Heart left ventricle (tissue), 16 donors: ENCODE measurements at regions of chr1 and their contacts with region 1.

Region 1: DNA sequence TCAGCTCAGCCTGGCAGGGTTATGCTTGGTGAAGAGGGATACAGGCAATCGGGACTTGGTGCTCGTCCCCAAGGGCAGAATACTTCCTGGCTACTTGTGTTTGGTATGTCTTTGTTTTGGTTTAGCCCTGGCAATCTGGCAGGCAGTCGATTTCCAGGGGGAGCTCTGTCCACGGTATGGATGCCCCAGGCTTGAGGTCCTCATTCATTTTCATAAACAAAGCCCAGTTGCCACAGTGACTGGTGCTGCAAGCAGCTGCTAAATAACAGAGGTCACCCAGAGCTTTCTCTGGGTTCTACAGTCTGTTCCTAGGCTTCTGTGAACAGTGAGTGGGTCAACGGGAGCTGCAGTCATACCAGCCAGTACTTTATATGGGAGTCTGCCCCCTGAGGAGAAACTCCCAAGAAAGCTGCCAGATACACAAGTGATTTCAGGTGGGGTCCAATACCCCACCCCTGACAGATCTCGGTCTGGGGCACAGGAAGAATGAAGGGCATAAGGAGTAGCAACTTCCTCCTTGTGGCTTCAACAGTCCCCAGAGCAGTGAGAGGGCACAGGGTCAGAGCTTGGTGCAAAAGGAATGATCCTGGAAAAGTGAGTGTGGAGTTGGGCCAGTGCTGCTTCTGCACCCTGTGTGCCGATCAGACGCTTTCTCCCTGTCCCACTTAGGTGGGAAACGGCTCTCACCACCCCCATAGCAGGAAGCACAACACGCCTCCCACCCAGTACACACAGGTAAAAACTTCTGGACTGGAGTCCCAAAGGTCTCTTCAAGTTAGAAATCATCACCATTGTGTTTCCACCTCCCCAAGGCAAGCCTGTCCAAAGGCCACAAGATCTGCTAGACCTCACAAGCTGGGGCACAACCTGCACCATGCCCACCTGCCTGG is 55.5 kb downstream of the TGFBR3 start:
- DNase-seq: peak; percentile 69 to 86 (median 81)
- ATAC-seq: peak; percentile 75 to 80 (median 76)
- H3K4me3 ChIP-seq: peak overlapping the region in 1 of 12 donors; percentile 11
- H3K27ac ChIP-seq: peak overlapping the region; percentile 33 to 94 (median 84)
- H3K4me1 ChIP-seq: peaks cover 3 to 57% (median 39%) of the 10 kb centered on the region in 12 donors
- H3K27me3 ChIP-seq: no peaks in the 10 kb centered on the region
- CTCF ChIP-seq: peak in 10 of 12 donors; percentile 21 to 64 (median 48)
- POLR2A ChIP-seq: no peak

Region 2: DNA sequence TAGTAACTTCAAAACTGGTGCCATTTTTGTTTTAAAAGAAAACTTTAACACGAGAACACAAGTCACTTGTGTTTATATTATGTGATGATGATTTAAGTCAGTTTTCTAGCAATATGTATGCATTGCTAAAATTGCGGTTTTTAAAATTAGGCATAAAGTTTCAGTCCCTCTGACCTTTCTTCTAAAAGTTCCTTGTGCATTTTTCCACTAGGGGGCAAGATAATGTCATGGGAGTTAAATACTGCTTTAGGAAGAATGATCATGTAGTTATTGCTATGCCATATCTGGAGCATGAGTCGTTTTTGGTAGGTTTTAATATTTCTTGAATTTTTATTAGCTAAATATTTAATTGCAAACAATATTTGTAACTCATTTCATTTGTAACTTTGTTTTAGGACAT is 319.1 kb before region 1 on chr1:
- intact Hi-C with region 1: no loop called
- DNase-seq: no peak
- ATAC-seq: peak in 1 of 4 donors; percentile 58
- H3K4me3 ChIP-seq: no peak overlapping the region
- H3K27ac ChIP-seq: no peak overlapping the region
- H3K4me1 ChIP-seq: no peaks in the 10 kb centered on the region
- H3K27me3 ChIP-seq: no peaks in the 10 kb centered on the region
- CTCF ChIP-seq: peak; percentile 53 to 78 (median 60)
- POLR2A ChIP-seq: no peak

Region 3: DNA sequence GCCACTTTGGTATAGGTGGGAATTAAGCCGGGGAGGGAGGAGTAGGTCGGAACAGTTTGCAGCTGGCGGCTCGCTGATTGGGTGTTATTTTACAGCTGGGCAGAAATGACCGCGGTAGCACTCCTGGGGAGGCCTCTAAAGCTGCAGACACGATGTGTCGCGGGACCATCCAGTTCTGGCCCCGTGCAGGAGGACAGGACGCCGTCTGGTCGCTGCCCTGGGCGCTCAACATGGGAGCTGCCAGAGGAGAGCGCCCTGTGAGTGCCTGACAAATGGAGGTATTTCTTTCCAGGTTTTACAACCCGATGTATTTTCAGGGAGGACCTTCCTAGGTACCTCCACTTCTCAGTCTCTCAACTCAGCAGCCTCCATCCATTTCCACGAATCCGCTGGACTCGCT is 283.6 kb before region 1 on chr1:
- intact Hi-C with region 1: no loop called
- DNase-seq: no peak
- ATAC-seq: peak in 1 of 4 donors; percentile 48
- H3K4me3 ChIP-seq: peak overlapping the region in 1 of 12 donors; percentile 3
- H3K27ac ChIP-seq: no peak overlapping the region
- H3K4me1 ChIP-seq: peaks cover 0 to 24% (median 0%) of the 10 kb centered on the region in 12 donors
- H3K27me3 ChIP-seq: no peaks in the 10 kb centered on the region
- CTCF ChIP-seq: peak in 1 of 12 donors; percentile 31
- POLR2A ChIP-seq: no peak

Region 4: GRCh38 chr1:91601554-91602376 is 228.7 kb before region 1 on chr1:
- intact Hi-C with region 1: loop called in 2 of 10 experiments (anchors 2 to 5 kb)
- DNase-seq: peak; percentile 55 to 93 (median 84)
- ATAC-seq: peak; percentile 93 to 97 (median 94)
- H3K4me3 ChIP-seq: no peak overlapping the region
- H3K27ac ChIP-seq: peak overlapping the region in 11 of 12 donors; percentile 28 to 80 (median 64)
- H3K4me1 ChIP-seq: peaks cover 0 to 31% (median 2%) of the 10 kb centered on the region in 12 donors
- H3K27me3 ChIP-seq: no peaks in the 10 kb centered on the region
- CTCF ChIP-seq: no peak
- POLR2A ChIP-seq: no peak

Region 5: DNA sequence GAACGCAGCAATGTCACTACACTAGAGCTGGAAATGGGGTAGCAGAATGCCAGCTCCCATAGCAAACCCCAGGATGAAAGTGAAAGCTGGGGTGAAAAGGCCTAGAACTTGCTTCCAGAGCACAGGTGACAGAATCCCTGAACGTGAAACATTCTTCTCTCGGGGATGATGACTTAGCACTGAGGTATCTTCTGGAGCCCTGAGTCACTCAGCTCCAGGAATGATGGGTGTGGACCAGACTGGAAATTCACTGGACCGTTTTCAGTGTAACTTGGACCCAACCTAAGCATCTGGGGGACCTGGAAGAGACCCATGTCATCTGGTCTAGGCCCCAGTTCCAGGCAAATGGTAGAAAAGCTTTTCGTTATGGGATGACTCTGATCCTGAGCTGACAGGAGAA is 220.9 kb before region 1 on chr1:
- intact Hi-C with region 1: loop called in 1 of 10 experiments (anchors 5 kb)
- DNase-seq: no peak
- ATAC-seq: peak in 2 of 4 donors; percentile 23 to 39
- H3K4me3 ChIP-seq: no peak overlapping the region
- H3K27ac ChIP-seq: peak overlapping the region in 1 of 12 donors; percentile 30
- H3K4me1 ChIP-seq: peaks cover 0 to 14% (median 0%) of the 10 kb centered on the region in 12 donors
- H3K27me3 ChIP-seq: no peaks in the 10 kb centered on the region
- CTCF ChIP-seq: no peak
- POLR2A ChIP-seq: no peak

Region 6: DNA sequence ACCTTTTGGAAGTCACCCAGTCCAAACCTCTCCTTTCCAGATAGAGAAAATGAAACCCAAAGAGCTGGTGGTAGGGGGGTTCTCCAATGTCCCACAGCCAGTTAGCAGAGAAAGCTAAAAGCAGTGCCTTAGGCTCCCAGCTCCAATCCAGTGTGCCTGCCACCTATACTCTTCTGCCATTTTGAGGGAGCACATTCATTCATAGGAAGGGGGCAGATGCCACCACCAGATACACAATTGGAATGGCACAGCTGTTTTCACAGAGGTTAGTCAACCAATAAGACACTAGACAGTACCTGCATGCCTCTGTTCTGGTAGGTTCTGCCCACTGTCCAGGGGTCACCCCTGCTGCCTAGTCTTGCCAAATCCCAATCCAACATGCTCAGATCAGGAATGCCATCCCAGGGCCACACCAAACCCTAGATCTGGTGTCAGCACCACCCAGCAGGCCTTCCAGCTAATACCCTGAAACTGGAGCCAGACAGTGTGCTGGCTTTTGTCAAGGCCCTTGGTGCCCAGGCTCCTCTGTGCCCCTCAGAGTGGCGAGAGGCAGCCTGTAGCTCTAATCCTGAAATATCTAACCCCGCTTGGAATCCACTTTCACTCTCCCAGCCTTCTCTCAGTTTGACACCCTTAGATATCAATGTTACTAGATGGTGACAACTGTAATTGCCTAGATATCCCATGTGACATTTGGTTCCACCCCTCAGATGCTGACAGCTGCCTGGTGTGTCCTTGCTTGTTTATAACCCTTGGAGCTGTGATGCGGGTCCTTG is 123.2 kb before region 1 on chr1:
- intact Hi-C with region 1: loop called in 2 of 10 experiments (anchors 2 to 5 kb)
- DNase-seq: peak; percentile 49 to 79 (median 65)
- ATAC-seq: peak; percentile 83 to 92 (median 88)
- H3K4me3 ChIP-seq: no peak overlapping the region
- H3K27ac ChIP-seq: peak overlapping the region; percentile 44 to 85 (median 64)
- H3K4me1 ChIP-seq: peaks cover 0 to 48% (median 14%) of the 10 kb centered on the region in 12 donors
- H3K27me3 ChIP-seq: no peaks in the 10 kb centered on the region
- CTCF ChIP-seq: no peak
- POLR2A ChIP-seq: no peak

Region 7: DNA sequence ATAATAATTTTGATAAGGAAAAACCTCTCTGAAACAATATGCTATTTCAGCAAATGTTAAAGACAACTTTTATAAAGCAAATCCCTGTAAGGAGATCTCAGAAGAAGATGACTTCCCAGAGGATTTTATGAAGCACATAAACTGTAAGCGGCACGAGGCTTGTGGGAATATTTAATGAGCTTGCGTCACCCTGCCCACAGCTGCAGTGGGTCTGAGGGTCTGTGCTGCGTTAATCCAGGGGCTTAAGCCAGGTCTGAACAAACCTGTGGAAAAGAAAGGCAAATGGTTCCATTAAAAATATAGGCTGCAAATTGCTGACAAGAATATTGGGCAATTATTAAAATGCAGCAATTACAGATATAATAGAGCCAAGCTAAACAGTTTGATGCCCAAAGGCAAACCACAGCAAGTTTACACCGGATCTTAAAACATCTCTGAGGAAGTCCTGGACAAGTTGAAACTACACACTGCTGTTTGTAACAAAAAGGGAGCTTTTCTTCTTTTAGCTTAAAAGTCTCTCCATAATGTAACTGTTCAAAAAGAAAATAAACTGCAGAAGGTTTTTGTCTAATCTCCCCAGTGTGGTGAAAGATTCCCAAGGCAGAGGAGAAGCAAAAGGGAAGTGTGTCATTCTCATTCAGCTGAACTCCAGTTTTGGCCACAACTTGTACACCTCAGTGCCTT is 33.7 kb after region 1 on chr1:
- intact Hi-C with region 1: no loop called
- DNase-seq: no peak
- ATAC-seq: peak in 3 of 4 donors; percentile 57 to 78 (median 74)
- H3K4me3 ChIP-seq: peak overlapping the region in 1 of 12 donors; percentile 3
- H3K27ac ChIP-seq: peak overlapping the region in 6 of 12 donors; percentile 7 to 71 (median 10)
- H3K4me1 ChIP-seq: peaks cover 0 to 34% (median 10%) of the 10 kb centered on the region in 12 donors
- H3K27me3 ChIP-seq: no peaks in the 10 kb centered on the region
- CTCF ChIP-seq: no peak
- POLR2A ChIP-seq: no peak